ENCODE measurements at regions of chr9 and their contacts with region 1.

Region 1: DNA sequence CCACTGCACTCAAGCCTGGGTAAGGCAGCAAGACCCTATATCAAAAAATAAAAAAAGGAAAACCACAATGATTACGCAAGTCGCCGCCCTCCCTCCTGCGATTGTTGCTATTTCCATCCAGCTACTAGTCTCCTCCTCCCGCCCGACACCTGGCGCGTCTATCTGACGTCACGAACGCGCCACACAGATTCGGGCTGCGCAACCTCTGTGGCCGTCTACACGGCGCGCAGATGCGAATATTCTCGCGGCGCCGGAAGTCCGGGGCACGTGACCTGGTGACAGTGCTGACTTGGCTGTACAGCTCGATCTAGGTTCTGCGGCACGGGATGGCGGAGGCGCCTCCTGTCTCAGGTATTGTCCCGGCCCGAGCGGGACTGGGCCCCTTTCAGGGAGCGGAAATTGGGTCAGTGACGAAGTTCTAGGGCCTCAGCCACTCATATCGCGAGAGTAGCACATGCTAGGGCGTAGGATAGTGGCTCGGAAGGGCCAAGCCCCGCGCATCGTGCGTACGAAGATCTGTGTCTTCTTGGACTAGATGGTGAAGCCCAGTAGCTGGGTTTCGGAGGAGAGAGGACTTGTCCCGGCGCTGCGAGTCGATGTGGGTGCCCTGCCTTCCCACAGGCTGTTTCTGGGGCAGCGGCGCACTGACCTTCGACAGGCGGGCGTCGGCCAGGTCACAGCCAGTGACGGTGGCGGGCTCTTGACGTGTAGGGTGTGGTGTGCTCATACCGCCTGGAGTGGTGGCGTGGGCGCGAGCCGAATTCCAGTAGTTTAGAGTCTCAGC is at the start of gene NFX1:
- DNase-seq: peak; percentile 83 to 97 (median 87)
- ATAC-seq: peak; percentile 95
- H3K4me3 ChIP-seq: peak within 1 kb of the TSS; percentile 60
- H3K27ac ChIP-seq: peak within 1 kb of the TSS; percentile 99
- H3K4me1 ChIP-seq: peaks cover 14 to 21% of the 10 kb centered on the region in 2 experiments; a peak in 4 of 5 replicates
- H3K27me3 ChIP-seq: no peaks in the 10 kb centered on the region
- CTCF ChIP-seq: no peak; a peak in 1 of 6 replicates
- EP300 ChIP-seq: 0 out of 2 replicates have a peak, but pooled peaks have one; percentile 36
- POLR2A ChIP-seq: peak; percentile 93
- RAD21 ChIP-seq: no peak
- polyA plus RNA-seq, gene NFX1: 8.8 to 32.5 TPM

Region 2: GRCh38 chr9:33264473-33265177 is 25.8 kb before region 1 on chr9 and contains the starts of genes BAG1 and CHMP5:
- CTCF ChIA-PET with region 1: no interaction called
- POLR2A ChIA-PET with region 1: interaction called, 3 read pairs
- in situ Hi-C with region 1: no loop called
- intact Hi-C with region 1: loop called (anchors 1 kb)
- DNase-seq: peak; percentile 90 to 97 (median 94)
- ATAC-seq: peak; percentile 96
- H3K4me3 ChIP-seq: peak within 1 kb of the TSS; percentile 80
- H3K27ac ChIP-seq: peak within 1 kb of the TSS; percentile 94
- H3K4me1 ChIP-seq: peaks cover 5 to 28% of the 10 kb centered on the region in 2 experiments; a peak in 3 of 5 replicates
- H3K27me3 ChIP-seq: no peaks in the 10 kb centered on the region
- CTCF ChIP-seq: peak in 2 of 3 experiments; percentile 20 to 28; a peak in 3 of 6 replicates
- EP300 ChIP-seq: no peak
- POLR2A ChIP-seq: peak; percentile 67
- RAD21 ChIP-seq: no peak
- polyA plus RNA-seq, gene BAG1: 9.7 to 10.0 TPM
- polyA plus RNA-seq, gene CHMP5: 99.5 to 105 TPM

Region 3: DNA sequence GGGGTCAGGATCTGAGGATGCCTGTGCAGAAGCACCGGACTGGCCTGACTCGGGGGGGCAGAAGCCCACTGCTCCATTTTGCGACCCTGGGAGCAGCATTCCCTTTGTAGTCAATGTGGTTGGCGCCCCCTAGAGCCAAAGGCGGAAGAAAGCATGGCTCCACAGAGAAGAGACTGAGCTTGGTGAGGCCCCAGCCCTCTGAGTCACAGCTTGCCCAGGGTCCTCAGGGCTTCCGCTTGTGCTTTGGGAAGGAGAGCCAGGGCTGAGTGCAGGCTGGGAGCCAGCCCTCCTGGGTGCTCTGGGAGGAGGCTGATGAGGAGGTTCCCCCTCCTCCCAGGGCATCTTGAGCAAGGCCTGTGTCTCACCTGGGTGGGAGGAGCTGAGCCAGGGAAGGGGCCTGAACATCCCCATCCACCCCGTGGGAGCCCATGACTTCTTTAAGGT is 162.4 kb after region 1 on chr9:
- CTCF ChIA-PET with region 1: interaction called, 3 read pairs
- POLR2A ChIA-PET with region 1: no interaction called
- in situ Hi-C with region 1: no loop called
- intact Hi-C with region 1: loop called (anchors 10 kb)
- DNase-seq: peak; percentile 54 to 82 (median 64)
- ATAC-seq: peak; percentile 94
- H3K4me3 ChIP-seq: no peak overlapping the region
- H3K27ac ChIP-seq: peak overlapping the region; percentile 48; the same call in 2 of the 3 replicates
- H3K4me1 ChIP-seq: peaks cover 16% of the 10 kb centered on the region in 2 experiments
- H3K27me3 ChIP-seq: no peaks in the 10 kb centered on the region
- CTCF ChIP-seq: peak; percentile 64 to 90 (median 73)
- EP300 ChIP-seq: no peak
- POLR2A ChIP-seq: no peak
- RAD21 ChIP-seq: peak; percentile 39 to 71; a peak in 3 of 4 replicates

Region 4: DNA sequence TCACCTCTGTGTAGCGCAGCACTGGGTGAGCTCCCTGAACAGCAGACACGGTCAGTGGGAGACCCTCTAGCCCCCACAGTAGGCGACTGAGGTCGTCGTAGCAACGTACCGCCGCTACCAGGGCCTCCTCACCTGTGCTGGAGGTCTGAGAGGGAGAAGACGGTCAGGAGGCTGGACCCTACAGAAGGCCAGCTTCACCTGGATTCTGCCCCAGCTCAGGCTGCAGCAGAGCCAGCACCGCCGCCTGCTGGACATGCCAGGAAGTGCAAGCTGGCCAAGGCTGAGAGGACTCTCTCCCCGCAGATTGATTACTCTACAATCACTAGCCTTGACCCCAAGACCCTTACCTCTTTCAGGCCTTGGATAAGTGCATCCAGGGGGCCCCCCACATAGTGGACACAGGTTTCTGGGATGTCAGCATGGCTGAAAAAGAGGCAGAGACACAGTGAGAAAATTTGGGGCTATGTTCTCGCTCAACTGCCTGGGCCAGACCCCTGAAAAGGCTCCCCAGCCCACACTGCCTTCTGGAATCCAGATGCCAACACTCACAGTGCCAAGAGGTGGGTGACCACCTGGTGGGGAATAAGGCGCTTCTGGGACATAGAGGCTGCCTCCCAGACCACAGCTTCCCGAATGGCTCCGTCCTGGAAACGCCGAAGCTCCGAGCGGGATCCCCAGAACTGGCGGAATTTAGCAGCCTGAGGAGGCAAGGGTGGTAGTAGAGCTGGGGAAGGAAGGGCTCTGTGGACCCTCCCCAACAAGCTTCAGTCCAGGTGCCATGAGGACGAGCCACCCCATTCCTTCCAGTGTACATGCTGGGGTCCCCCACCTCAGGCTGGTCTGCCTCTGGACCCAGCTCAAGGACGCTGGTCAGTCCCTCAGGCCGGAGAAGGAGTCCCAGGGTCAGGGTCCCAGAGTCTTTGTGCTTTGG is 176.4 kb after region 1 on chr9:
- CTCF ChIA-PET with region 1: no interaction called
- POLR2A ChIA-PET with region 1: interaction called, 10 read pairs
- in situ Hi-C with region 1: no loop called
- intact Hi-C with region 1: no loop called
- DNase-seq: peak; percentile 56 to 67 (median 62)
- ATAC-seq: peak; percentile 94
- H3K4me3 ChIP-seq: no peak overlapping the region
- H3K27ac ChIP-seq: no peak overlapping the region
- H3K4me1 ChIP-seq: peaks cover under 1 to 3% of the 10 kb centered on the region in 2 experiments; a peak in 3 of 5 replicates
- H3K27me3 ChIP-seq: no peaks in the 10 kb centered on the region
- CTCF ChIP-seq: peak; percentile 82 to 87 (median 83)
- EP300 ChIP-seq: no peak
- POLR2A ChIP-seq: no peak
- RAD21 ChIP-seq: peak; percentile 60 to 84